Endothelial cell of umbilical vein (primary cell): ENCODE measurements at regions of chr11 and their contacts with region 1.

Region 1: GRCh38 chr11:16239141-16240105 is 116.9 kb downstream of the SOX6 start:
- DNase-seq: no peak
- H3K4me3 ChIP-seq: no peak overlapping the region
- H3K27ac ChIP-seq: no peak overlapping the region
- H3K4me1 ChIP-seq: no peaks in the 10 kb centered on the region
- H3K27me3 ChIP-seq: no peaks in the 10 kb centered on the region
- CTCF ChIP-seq: no peak
- POLR2A ChIP-seq: no peak

Region 2: GRCh38 chr11:16226245-16226644 is 13.2 kb before region 1 on chr11:
- CTCF ChIA-PET with region 1: no interaction called
- POLR2A ChIA-PET with region 1: no interaction called
- dilution Hi-C with region 1: no loop called
- intact Hi-C with region 1: loop called (anchors 2 kb)
- DNase-seq: peak; percentile 64
- H3K4me3 ChIP-seq: no peak overlapping the region
- H3K27ac ChIP-seq: no peak overlapping the region
- H3K4me1 ChIP-seq: peaks cover 12% of the 10 kb centered on the region
- H3K27me3 ChIP-seq: no peaks in the 10 kb centered on the region
- CTCF ChIP-seq: no peak
- POLR2A ChIP-seq: no peak

Region 3: DNA sequence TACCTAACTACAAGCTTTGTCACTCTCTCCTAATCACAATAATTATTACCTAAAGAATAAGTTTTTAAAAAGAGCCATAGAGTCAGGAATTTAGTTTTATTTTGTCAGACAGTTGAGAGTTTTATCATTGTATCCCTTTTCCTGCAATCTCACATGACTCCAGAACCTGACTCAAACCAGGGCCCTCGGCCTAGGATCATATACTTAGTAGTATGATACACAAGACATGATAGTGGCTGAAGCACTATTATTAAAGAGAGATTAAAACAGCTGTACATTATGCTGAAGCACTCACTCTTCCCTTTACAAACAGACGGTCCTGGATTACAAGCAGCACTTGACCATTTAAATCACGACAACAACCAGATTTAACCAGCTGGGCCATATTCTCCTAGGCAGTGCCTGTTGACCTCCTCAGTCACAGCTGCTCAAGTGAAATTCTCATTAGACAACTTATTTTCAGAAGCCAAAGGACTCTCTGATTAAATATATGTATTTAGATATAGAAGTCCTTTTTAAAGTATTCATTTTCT is 72.9 kb after region 1 on chr11:
- CTCF ChIA-PET with region 1: no interaction called
- POLR2A ChIA-PET with region 1: no interaction called
- dilution Hi-C with region 1: no loop called
- intact Hi-C with region 1: no loop called
- DNase-seq: no peak
- H3K4me3 ChIP-seq: no peak overlapping the region
- H3K27ac ChIP-seq: no peak overlapping the region
- H3K4me1 ChIP-seq: no peaks in the 10 kb centered on the region
- H3K27me3 ChIP-seq: no peaks in the 10 kb centered on the region
- CTCF ChIP-seq: no peak
- POLR2A ChIP-seq: no peak

Region 4: DNA sequence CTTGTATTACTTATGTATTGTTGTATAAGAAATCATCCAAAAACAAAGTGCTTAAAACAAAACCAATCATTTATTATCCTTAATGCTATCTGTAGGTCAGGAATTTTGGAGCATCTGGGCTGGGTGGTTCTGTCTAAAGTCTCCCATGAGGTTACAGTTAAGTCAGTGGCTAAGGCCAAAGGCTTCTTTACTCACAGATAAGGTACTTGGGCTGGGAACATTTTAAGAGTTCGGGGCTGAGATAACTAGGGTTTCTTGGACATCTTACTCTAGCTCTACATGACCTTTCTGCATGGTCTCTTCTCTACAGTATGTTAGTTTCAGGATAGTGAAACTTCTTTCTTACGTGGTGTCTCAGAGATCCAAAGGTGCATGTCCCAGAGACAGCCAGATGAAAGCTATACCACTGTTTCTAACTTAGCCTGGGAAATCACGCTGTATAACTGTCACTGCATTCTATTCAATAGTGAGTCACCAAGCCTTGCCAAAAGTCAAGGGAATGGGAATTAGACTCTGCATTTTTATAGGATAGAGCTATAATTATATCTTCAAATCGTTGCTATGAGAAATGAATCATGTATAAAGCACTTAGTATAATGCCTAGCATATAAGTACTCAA is 87.4 kb after region 1 on chr11:
- CTCF ChIA-PET with region 1: no interaction called
- POLR2A ChIA-PET with region 1: no interaction called
- dilution Hi-C with region 1: no loop called
- intact Hi-C with region 1: no loop called
- DNase-seq: no peak
- H3K4me3 ChIP-seq: no peak overlapping the region
- H3K27ac ChIP-seq: no peak overlapping the region
- H3K4me1 ChIP-seq: no peaks in the 10 kb centered on the region
- H3K27me3 ChIP-seq: no peaks in the 10 kb centered on the region
- CTCF ChIP-seq: no peak
- POLR2A ChIP-seq: no peak